Ascending aorta (tissue), 2 donors: ENCODE measurements at regions of chr15 and their contacts with region 1.

Region 1: GRCh38 chr15:45457641-45458433 is 64.7 kb downstream of the SLC30A4 start:
- DNase-seq: peak in 1 of 2 donors; percentile 87
- H3K4me3 ChIP-seq: peak overlapping the region; percentile 45 to 63
- H3K27ac ChIP-seq: peak overlapping the region; percentile 47 to 70
- H3K4me1 ChIP-seq: peaks cover 0 to 3% of the 10 kb centered on the region in 2 donors
- H3K27me3 ChIP-seq: no peaks in the 10 kb centered on the region
- CTCF ChIP-seq: peak; percentile 63 to 66 (median 65)

Region 2: DNA sequence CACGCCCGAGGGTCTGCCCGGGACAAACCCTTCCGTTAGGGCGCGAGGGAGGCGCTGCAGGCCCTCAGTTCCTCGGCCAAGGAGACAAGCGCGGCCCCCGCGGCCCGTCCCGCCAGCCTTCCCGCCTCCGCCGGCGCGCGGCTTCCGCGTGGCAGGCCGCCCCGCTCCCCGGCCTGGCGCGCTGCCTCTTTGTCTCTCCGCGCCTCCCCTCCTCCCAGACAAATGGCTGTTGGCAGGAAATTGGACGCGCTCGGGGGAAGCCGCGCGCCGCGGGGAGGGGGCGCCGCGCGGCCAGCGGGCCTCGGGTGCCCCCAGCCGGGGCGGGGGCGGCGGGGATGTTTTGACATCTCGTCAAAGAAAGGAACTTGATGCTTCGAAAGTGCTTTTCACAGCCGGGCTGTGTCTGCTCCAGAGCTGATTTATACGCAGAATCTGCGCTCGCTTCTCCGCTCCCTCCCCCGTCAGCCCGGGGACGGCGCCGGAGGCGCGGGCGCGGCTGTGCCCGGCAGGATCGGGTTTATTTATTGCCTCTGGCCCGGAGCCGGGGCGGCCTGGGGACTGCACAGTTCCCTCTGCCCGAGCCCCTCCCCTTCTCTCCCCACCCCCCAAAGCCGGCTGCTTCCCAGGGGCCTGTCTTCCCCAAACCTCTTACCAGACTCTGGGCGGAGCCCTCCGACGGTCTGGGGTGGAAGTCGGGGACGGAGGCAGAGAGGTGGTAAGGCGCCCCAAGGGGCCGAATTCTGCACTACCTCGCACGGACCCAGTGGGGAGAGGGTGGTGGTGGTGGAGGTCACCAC is 290.8 kb before region 1 on chr15:
- intact Hi-C with region 1: loop called (anchors 2 kb)
- DNase-seq: peak; percentile 49 to 93
- H3K4me3 ChIP-seq: peak overlapping the region; percentile 78 to 97
- H3K27ac ChIP-seq: peak overlapping the region; percentile 97 to 99
- H3K4me1 ChIP-seq: peaks cover 0 to 14% of the 10 kb centered on the region in 2 donors
- H3K27me3 ChIP-seq: no peaks in the 10 kb centered on the region
- CTCF ChIP-seq: peak; percentile 40 to 74 (median 62)

Region 3: DNA sequence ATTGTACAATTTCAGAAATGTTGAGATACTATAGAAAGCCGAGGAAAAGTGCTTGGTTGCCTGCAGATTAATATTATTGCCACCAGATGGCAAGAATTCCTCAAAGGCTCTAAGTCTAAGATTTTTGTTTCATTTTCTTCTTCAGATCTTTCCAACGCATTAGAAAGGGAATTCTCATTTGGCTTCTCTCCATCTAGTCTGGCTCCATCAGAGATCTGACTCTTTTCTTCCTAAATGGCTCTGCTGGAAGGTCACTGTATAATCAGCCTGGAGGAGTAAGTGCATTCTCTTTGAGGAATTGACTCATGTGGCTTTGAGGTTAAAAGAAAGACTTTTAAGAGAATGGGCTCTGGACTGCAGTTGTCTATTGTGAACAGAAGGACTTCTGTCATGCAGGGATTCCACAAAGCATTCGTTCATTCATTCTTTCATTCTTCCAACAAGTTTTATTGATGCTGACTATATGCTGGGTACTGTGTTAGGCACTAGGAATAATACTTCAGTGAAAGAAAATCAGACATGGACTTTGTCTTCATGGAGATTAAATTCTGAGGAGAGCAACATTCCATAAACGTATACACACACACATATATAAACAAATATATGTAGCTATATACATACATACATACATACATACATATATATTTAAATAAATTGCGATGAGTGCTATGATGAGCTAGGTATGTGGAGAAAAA is 150.5 kb before region 1 on chr15:
- intact Hi-C with region 1: loop called (anchors 5 kb)
- DNase-seq: no peak
- H3K4me3 ChIP-seq: peak overlapping the region in 1 of 2 donors; percentile 48
- H3K27ac ChIP-seq: no peak overlapping the region
- H3K4me1 ChIP-seq: peaks cover 0 to 2% of the 10 kb centered on the region in 2 donors
- H3K27me3 ChIP-seq: no peaks in the 10 kb centered on the region
- CTCF ChIP-seq: peak; percentile 35 to 58 (median 35)

Region 4: DNA sequence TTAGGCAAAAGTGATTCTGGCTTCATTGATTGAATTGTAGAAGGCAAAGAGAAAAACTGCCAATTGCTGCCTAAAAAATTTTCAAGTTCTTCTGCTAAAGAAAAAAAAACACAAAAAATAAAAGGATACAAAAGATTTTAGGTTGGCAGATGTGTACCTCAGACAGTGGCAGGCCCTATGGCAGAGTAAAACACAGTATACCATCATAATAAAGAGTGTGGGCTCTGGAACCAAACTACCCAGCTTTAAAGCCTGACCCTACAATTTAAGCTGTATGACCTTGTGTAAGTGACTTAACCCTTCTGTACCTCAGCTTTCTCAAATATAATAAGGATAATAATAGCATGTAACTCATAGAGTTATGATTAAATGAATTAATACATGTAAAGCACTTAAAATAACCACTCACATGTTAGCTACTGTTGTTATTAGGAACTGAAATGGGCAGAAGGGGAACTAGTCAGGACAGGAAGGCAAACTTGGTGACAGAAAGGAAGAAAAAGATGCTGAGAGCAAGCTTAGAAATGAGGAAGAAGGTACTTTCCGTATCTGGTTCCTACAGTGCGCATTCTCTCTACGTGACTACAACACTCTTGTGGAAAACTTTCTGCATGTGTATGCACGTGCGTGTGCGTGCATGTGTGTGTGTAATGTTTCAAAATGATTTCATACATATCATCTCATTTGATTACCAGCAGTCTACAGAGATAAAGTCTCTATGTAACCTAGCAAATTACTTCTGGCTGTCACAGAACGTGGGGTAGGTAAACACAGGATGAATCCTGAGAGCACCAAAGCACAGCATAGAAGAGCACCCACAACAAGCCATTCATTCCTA is 65.9 kb before region 1 on chr15:
- intact Hi-C with region 1: no loop called
- DNase-seq: no peak
- H3K4me3 ChIP-seq: no peak overlapping the region
- H3K27ac ChIP-seq: no peak overlapping the region
- H3K4me1 ChIP-seq: no peaks in the 10 kb centered on the region
- H3K27me3 ChIP-seq: no peaks in the 10 kb centered on the region
- CTCF ChIP-seq: no peak

Region 5: DNA sequence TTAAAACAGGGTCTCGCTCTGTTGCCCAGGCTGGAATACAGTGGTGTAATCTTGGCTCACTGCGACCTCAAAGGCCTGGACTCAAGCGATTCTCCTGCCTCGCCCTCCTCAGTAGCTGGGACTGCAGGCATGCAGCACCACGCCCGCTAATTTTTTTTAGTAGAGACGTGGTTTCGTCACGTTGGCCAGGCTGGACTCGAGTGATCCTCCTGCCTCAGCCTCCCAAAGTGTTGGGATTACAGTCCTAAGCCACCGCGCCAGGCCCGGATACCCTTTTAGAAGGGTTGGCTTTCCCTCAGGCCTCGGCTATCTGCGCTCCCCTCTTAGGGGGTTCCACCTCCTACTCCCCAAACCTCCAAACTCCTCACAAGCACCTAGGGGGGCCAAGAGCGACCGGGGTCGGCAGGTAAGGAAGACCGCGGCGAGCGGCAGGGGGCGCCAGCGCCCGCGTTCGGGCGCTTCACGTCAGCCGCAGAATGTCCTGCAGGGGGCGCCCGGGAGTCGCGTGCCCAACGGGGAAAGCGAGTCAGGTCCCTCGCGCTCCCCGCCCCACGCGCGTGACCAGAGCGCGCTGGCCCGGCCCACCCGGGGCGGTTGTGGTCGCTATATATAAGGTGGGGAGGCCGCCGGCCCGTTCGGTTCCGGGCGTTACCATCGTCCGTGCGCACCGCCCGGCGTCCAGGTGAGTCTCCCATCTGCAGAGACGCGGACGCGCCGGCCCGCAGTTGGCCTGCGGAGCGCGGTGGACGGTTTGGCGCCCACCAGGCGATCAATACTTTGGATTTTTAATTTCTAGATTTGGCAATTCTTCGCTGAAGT is 27.7 kb before region 1 on chr15:
- intact Hi-C with region 1: loop called (anchors 1 kb)
- DNase-seq: peak in 1 of 2 donors; percentile 77
- H3K4me3 ChIP-seq: peak overlapping the region; percentile 43 to 56
- H3K27ac ChIP-seq: no peak overlapping the region
- H3K4me1 ChIP-seq: peaks cover 0 to 5% of the 10 kb centered on the region in 2 donors
- H3K27me3 ChIP-seq: no peaks in the 10 kb centered on the region
- CTCF ChIP-seq: peak; percentile 92 to 97 (median 92)

Region 6: GRCh38 chr15:45468294-45468693 is 10.5 kb after region 1 on chr15:
- intact Hi-C with region 1: no loop called
- DNase-seq: no peak
- H3K4me3 ChIP-seq: no peak overlapping the region
- H3K27ac ChIP-seq: no peak overlapping the region
- H3K4me1 ChIP-seq: no peaks in the 10 kb centered on the region
- H3K27me3 ChIP-seq: no peaks in the 10 kb centered on the region
- CTCF ChIP-seq: no peak